ENCODE measurements at regions of chr1 and their contacts with region 1.

Region 1: GRCh38 chr1:26541816-26542711 is 12.5 kb downstream of the RPS6KA1 start:
- DNase-seq: peak; percentile 94
- H3K4me3 Mint-ChIP-seq: peak overlapping the region; percentile 69
- H3K27ac Mint-ChIP-seq: peak overlapping the region; percentile 98
- H3K4me1 Mint-ChIP-seq: peaks cover 88% of the 10 kb centered on the region
- H3K27me3 Mint-ChIP-seq: no peaks in the 10 kb centered on the region

Region 2: GRCh38 chr1:26431979-26432695 is 109.9 kb before region 1 on chr1 and contains the start of gene DHDDS:
- CTCF ChIA-PET with region 1: interaction called, 4 read pairs
- POLR2A ChIA-PET with region 1: interaction called, 3 read pairs
- intact Hi-C with region 1: loop called (anchors 1 kb)
- DNase-seq: peak; percentile 99
- H3K4me3 Mint-ChIP-seq: peak within 1 kb of the TSS; percentile 91
- H3K27ac Mint-ChIP-seq: peak within 1 kb of the TSS; percentile 80
- H3K4me1 Mint-ChIP-seq: peaks cover 23% of the 10 kb centered on the region
- H3K27me3 Mint-ChIP-seq: no peaks in the 10 kb centered on the region
- total RNA-seq, gene DHDDS: 41.9 to 45.5 TPM

Region 3: DNA sequence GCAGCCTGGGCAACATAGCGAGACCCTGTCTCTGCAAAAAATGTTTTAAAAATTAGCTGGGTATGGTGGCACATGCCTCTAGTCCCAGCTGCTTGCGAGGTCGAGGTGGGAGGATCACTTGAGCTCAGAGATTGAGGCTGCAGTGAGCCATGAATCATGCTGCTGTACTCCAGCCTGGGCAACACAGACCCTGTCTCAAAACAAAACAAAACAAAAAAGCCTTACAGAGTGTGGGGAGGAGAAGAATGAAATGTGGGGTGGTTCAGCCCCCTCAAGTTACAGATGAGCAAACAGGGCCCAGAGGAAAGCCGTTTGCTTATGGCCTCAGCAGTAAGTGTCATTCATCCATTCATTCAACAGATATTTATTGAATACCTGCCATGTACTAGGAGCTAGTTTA is 28.2 kb after region 1 on chr1:
- CTCF ChIA-PET with region 1: interaction called, 14 read pairs
- POLR2A ChIA-PET with region 1: no interaction called
- intact Hi-C with region 1: no loop called
- DNase-seq: peak; percentile 32
- H3K4me3 Mint-ChIP-seq: no peak overlapping the region
- H3K27ac Mint-ChIP-seq: peak overlapping the region; percentile 29
- H3K4me1 Mint-ChIP-seq: peaks cover 20% of the 10 kb centered on the region
- H3K27me3 Mint-ChIP-seq: no peaks in the 10 kb centered on the region

Region 4: GRCh38 chr1:26593385-26593784 is 51.3 kb after region 1 on chr1:
- CTCF ChIA-PET with region 1: interaction called, 15 read pairs
- POLR2A ChIA-PET with region 1: no interaction called
- intact Hi-C with region 1: no loop called
- DNase-seq: no peak
- H3K4me3 Mint-ChIP-seq: no peak overlapping the region
- H3K27ac Mint-ChIP-seq: no peak overlapping the region
- H3K4me1 Mint-ChIP-seq: peaks cover 6% of the 10 kb centered on the region
- H3K27me3 Mint-ChIP-seq: no peaks in the 10 kb centered on the region

Region 5: DNA sequence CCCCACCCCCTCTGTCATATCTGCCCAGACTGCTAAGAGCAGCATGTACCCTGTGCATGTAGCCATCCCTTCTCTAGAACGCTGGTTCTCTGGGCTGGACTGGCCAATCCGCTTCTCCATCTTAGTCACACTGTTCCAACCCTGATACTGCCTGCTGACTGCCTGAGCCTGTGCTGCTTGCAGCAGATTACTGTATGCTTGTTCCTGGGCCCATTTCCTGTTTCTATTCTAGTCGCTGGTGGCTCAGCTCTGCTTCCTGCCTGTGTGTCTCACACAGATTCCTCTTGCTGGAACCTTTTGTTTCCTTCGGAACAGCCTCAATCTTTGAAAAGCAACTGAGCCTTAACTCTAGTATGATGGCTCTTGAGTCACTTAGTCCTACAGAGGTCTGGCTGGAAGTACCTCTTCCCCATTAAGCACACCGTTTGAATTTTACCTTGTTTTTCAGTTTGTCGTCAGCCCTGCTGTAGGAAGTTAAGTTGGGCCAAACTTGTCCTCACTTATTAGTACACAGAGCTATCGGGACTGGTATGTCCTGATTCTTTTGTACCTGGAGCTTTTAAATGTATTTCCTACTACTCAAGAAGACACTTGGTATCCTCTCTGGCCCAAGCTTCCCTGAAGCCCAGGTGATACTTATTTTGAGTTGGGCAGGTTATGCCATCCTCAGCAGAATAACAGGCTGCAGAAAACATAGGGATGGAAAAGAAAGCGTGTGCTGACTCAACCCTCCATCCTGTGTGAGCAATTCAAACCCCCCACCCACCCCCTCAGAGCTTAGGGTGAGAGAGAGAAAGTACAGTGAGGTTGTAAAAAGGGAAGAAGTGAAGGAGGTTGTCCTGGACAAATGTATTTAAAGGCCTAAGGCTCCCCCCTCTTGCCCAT is 202.3 kb after region 1 on chr1:
- CTCF ChIA-PET with region 1: no interaction called
- POLR2A ChIA-PET with region 1: no interaction called
- intact Hi-C with region 1: loop called (anchors 1 kb)
- DNase-seq: peak; percentile 91
- H3K4me3 Mint-ChIP-seq: peak overlapping the region; percentile 48
- H3K27ac Mint-ChIP-seq: peak overlapping the region; percentile 92
- H3K4me1 Mint-ChIP-seq: peaks cover 83% of the 10 kb centered on the region
- H3K27me3 Mint-ChIP-seq: no peaks in the 10 kb centered on the region

Region 6: DNA sequence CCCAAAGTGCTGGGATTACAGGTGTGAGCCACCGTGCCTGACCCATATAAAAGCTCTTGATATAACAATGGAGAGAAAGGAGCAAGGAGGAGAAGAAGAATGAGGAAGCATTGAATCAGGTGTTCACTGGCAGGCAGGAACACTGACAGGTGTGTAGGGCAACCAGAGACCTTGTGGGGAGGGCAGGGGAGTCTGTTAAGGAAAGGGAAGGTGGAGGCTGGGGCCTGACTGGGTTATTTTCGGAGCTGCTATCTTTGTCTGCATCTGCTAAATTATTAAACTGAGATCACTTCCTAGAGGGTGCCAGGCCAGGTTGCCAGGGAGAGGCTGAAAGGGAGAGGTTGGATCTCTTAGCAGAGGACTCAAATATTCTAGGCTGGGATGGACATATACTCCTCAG is 444.6 kb after region 1 on chr1:
- CTCF ChIA-PET with region 1: no interaction called
- POLR2A ChIA-PET with region 1: no interaction called
- intact Hi-C with region 1: no loop called
- DNase-seq: no peak
- H3K4me3 Mint-ChIP-seq: no peak overlapping the region
- H3K27ac Mint-ChIP-seq: no peak overlapping the region
- H3K4me1 Mint-ChIP-seq: peaks cover 6% of the 10 kb centered on the region
- H3K27me3 Mint-ChIP-seq: peaks cover 20% of the 10 kb centered on the region

Measured in activated CD4-positive, alpha-beta memory T cell treated with anti-CD3 and anti-CD28 coated beads for 36 hours (primary cell).